ENCODE measurements at regions of chr2 and their contacts with region 1.

Region 1: GRCh38 chr2:86455181-86455580 is 14.0 kb downstream of the KDM3A start:
- DNase-seq: no peak
- H3K4me3 ChIP-seq: no peak overlapping the region
- H3K27ac ChIP-seq: no peak overlapping the region
- H3K4me1 ChIP-seq: peaks cover 7% of the 10 kb centered on the region
- H3K27me3 ChIP-seq: no peaks in the 10 kb centered on the region
- CTCF ChIP-seq: no peak
- EP300 ChIP-seq: no peak
- POLR2A ChIP-seq: no peak

Region 2: DNA sequence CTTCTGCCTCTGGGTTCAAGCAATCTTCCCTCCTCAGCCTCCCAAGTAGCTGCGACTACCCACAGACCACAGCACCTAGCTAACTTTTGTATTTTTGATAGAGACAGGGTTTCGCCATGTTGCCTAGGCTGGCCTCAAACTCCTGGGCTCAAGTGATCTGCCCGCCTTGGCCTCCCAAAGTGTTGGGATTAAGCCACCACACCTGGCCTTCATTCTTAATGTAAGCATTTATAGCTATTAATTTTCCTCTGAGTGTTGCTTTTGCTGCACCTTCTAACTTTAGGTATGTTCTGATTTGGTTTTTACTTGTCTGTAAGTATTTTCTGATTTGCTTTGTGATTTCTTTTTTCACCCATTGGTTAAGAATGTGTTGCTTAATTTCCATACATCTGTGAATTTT is 78.4 kb after region 1 on chr2:
- intact Hi-C with region 1: no loop called
- DNase-seq: no peak
- H3K4me3 ChIP-seq: no peak overlapping the region
- H3K27ac ChIP-seq: no peak overlapping the region
- H3K4me1 ChIP-seq: no peaks in the 10 kb centered on the region
- H3K27me3 ChIP-seq: no peaks in the 10 kb centered on the region
- CTCF ChIP-seq: no peak
- EP300 ChIP-seq: no peak
- POLR2A ChIP-seq: no peak

Region 3: DNA sequence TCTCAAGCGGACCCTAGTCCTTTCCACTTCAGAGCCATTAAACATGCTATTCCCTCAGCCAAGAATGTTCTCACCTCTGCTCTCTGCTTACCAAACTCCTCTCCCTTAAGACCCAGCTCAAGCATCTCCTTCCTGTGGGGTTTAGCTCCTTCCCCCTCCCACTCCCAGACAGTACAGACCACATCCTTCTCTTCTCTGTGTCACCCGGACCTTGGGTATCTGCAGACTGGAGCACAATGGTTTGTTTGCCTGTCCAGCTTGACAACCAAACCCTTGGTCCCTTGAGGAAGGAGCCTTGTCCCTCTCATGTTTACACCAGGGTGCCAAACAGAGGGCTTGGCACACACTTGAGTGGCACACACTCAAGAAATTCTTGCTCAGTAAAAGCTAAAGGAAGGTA is 339.7 kb after region 1 on chr2:
- intact Hi-C with region 1: loop called in 1 of 4 experiments (anchors 5 kb)
- DNase-seq: no peak
- H3K4me3 ChIP-seq: no peak overlapping the region
- H3K27ac ChIP-seq: no peak overlapping the region
- H3K4me1 ChIP-seq: peaks cover 5% of the 10 kb centered on the region
- H3K27me3 ChIP-seq: peaks cover 4% of the 10 kb centered on the region
- CTCF ChIP-seq: no peak
- EP300 ChIP-seq: no peak
- POLR2A ChIP-seq: no peak

Measured in ovary (tissue), 10 donors.